Left cardiac atrium (tissue), 4 donors: ENCODE measurements at regions of chr1 and their contacts with region 1.

Region 1: GRCh38 chr1:18100491-18101063 is 7.0 kb upstream of the IGSF21 start:
- DNase-seq: peak; percentile 63
- ATAC-seq: peak; percentile 55 to 79

Region 2: DNA sequence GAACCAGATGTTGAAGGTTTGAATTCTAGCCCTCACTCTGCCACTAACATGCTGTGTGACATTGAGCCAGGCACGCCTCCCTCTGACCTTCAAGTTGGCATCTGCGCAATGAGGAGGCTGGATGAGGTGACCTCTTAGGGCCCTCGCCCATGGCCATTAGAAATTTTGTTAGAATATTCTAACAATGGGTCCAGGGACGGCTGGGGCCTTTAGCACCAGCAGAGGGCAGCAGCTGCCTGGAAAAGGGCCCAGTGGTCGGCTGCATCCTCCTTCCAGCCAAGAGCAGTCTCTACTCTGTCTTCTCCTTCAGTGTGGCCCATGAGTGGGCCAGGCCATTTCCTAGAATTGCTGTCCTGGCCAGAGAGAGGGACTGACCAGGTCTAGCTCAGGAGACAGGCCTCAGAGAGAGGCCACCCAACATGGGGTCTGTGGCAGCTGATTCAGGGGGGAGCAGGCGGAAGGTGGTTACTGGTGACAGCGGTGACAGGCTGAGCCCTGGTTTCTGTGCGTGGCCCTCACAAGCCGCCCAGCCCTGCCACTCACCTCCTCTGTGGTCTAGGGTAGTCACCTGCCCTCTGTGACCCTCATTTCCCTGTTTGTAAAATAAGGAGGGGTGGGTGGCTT is 446.7 kb before region 1 on chr1:
- intact Hi-C with region 1: loop called in 1 of 2 experiments (anchors 10 kb)
- DNase-seq: peak; percentile 50
- ATAC-seq: peak; percentile 40 to 48

Region 3: GRCh38 chr1:17849216-17849615 is 251.4 kb before region 1 on chr1:
- intact Hi-C with region 1: loop called in 1 of 2 experiments (anchors 5 kb)
- DNase-seq: no peak
- ATAC-seq: no peak

Region 4: GRCh38 chr1:17929224-17929623 is 171.4 kb before region 1 on chr1:
- intact Hi-C with region 1: loop called (anchors 2 to 10 kb)
- DNase-seq: no peak
- ATAC-seq: no peak

Region 5: GRCh38 chr1:17984583-17984982 is 116.0 kb before region 1 on chr1:
- intact Hi-C with region 1: no loop called
- DNase-seq: no peak
- ATAC-seq: no peak